ENCODE measurements at regions of chr1 and their contacts with region 1.

Region 1: GRCh38 chr1:84478876-84479868 is at the start of gene RPF1:
- DNase-seq: peak; percentile 89
- ATAC-seq: peak; percentile 99
- H3K4me3 ChIP-seq: peak within 1 kb of the TSS; percentile 71 to 81
- H3K27ac ChIP-seq: peak within 1 kb of the TSS; percentile 93
- H3K4me1 ChIP-seq: peaks cover 11% of the 10 kb centered on the region
- H3K27me3 ChIP-seq: no peaks in the 10 kb centered on the region
- CTCF ChIP-seq: no peak
- total RNA-seq, gene RPF1: 73.0 TPM

Region 2: DNA sequence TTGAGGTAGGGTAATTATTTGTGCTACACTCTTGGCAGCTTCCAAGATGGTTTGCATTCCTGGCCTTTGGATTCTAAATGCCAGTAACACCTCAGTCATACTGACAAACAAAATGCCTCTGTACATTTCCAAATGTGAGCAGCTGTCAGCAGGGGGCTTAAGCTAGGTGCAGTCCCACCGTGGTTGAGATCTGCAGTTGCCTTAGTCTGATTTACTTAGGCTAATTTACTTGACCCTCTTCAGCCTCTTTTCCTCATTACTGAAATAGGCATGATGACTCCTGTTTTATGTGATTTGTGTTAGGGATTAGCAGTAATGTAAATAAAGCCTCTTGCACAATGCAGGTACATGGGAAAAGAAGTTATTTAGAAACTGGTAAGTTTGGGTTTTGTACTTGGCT is 13.6 kb after region 1 on chr1:
- CTCF ChIA-PET with region 1: no interaction called
- POLR2A ChIA-PET with region 1: interaction called, 3 read pairs
- in situ Hi-C with region 1: no loop called
- intact Hi-C with region 1: loop called (anchors 1 kb)
- DNase-seq: no peak
- ATAC-seq: no peak
- H3K4me3 ChIP-seq: no peak overlapping the region
- H3K27ac ChIP-seq: no peak overlapping the region
- H3K4me1 ChIP-seq: no peaks in the 10 kb centered on the region
- H3K27me3 ChIP-seq: no peaks in the 10 kb centered on the region
- CTCF ChIP-seq: 0 out of 2 replicates have a peak, but pooled peaks have one; percentile 28

Region 3: DNA sequence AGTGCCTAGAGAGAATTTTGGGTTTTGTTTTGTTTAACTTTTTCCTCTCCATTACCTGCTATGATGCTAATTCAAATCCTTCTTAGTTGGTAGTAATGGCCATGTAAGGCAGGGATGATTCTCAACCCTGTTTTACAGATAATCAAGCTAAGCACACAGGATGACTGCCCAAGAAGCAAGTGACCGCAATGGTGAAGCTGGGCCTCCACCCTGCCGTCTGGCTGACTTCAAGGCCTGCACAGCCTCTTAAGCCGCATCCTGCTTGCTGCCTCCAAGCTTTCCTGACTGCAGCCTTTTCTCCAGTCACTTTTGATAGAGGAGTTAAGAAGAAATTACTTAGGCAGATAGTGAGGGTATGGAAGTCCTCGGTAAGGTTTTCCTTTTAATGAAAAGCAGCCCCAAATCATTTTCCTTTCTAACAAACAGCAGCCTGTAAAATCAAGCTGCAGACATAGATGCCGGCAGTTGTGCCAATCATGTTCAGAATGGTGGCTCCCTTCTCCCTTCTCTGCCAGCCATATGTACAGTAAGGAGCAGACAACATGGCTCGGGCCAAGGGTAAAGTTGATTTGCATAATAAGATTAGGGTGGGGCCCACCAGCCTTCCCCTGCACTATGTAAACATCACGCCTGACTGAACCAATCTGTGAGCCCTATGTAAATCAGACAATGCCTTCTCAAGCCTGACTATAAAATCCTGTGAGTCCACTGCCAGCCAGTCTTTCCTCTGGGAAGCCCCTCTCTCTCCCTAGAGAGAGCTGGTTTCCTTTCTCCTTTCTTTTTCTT is 103.8 kb after region 1 on chr1:
- CTCF ChIA-PET with region 1: no interaction called
- POLR2A ChIA-PET with region 1: no interaction called
- in situ Hi-C with region 1: no loop called
- intact Hi-C with region 1: no loop called
- DNase-seq: no peak
- ATAC-seq: peak; percentile 37; the same call in 1 of the 2 replicates
- H3K4me3 ChIP-seq: no peak overlapping the region
- H3K27ac ChIP-seq: no peak overlapping the region
- H3K4me1 ChIP-seq: no peaks in the 10 kb centered on the region
- H3K27me3 ChIP-seq: no peaks in the 10 kb centered on the region
- CTCF ChIP-seq: no peak